SK-N-SH (cell line): ENCODE measurements at regions of chr17 and their contacts with region 1.

Region 1: DNA sequence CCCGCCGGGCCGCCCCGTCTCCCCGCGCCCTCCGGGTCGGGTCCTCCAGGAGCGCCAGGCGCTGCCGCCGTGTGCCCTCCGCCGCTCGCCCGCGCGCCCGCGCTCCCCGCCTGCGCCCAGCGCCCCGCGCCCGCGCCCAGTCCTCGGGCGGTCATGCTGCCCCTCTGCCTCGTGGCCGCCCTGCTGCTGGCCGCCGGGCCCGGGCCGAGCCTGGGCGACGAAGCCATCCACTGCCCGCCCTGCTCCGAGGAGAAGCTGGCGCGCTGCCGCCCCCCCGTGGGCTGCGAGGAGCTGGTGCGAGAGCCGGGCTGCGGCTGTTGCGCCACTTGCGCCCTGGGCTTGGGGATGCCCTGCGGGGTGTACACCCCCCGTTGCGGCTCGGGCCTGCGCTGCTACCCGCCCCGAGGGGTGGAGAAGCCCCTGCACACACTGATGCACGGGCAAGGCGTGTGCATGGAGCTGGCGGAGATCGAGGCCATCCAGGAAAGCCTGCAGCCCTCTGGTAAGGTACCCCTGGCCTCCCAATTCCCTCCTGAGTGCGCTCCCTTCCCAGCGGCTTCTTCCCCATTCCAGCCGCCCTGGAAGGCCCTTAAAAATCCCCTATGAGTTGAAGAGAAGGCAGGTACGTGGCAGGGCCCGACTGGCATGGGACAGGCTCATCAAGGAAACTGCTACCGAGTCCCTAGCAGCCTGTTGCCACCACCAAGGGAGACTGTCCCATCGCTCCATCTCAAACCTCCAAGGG is 505 bp downstream of the IGFBP4 start:
- DNase-seq: peak; percentile 92
- H3K4me3 ChIP-seq: peak overlapping the region; percentile 62 to 81
- H3K27ac ChIP-seq: peak overlapping the region; percentile 74 to 77
- H3K4me1 ChIP-seq: peaks cover 3 to 46% of the 10 kb centered on the region in 2 experiments; a peak in 2 of 4 replicates
- H3K27me3 ChIP-seq: no peaks in the 10 kb centered on the region
- CTCF ChIP-seq: peak; percentile 50
- EP300 ChIP-seq: no peak
- RAD21 ChIP-seq: peak; percentile 56

Region 2: DNA sequence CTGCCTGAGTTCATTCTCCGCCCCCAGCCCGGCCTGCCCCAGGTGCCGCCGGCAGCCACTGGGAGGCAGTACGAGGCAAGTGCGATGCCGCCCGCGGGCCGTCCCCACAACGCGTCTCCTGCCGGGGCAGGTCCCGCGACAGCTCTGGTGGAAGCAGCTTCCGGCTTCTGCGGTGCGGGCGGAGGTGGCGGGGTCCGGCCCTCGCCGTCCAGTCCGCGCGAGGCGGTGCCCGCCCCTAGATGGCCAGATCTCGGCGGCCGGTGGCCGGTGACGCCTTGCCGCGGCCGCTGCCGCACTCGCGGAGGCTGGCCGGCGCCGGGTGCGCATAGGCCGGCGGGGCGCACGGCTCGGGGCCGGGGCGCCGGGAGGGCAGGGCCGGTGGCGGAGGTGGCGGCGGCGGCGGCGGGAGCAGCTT is 81.1 kb before region 1 on chr17:
- CTCF ChIA-PET with region 1: interaction called, 19 read pairs
- POLR2A ChIA-PET with region 1: no interaction called
- DNase-seq: peak; percentile 93
- H3K4me3 ChIP-seq: peak overlapping the region; percentile 57 to 62
- H3K27ac ChIP-seq: no peak overlapping the region
- H3K4me1 ChIP-seq: peaks cover 6 to 16% of the 10 kb centered on the region in 2 experiments; a peak in 2 of 4 replicates
- H3K27me3 ChIP-seq: no peaks in the 10 kb centered on the region
- CTCF ChIP-seq: peak; percentile 72
- EP300 ChIP-seq: no peak
- RAD21 ChIP-seq: peak; percentile 68

Region 3: DNA sequence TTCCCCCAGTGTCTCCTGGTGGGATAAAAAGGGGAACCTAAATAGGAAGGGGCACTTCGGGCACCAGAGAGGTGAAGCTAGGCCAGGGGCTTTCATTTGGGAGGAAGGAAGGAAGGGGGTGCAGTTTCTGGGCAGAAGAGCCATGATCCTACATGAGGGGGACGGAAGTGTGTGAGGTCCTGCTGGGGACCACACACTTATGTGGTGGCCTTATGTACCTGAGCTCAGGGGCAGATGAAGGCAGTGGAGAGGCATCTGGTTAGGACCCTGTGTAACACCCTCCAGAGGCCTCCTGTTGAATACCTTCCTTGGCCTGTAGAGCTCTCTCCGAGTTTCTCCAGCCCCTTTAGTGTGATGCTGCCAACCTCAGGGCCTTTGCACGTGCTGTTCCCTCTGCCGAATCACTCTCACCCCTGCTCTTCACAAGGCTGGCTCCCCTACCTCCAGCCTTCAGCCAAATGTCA is 20.7 kb after region 1 on chr17:
- CTCF ChIA-PET with region 1: interaction called, 265 read pairs
- POLR2A ChIA-PET with region 1: interaction called, 5 read pairs
- DNase-seq: no peak
- H3K4me3 ChIP-seq: no peak overlapping the region
- H3K27ac ChIP-seq: no peak overlapping the region
- H3K4me1 ChIP-seq: peaks cover 12 to 40% of the 10 kb centered on the region in 2 experiments
- H3K27me3 ChIP-seq: no peaks in the 10 kb centered on the region
- CTCF ChIP-seq: no peak
- EP300 ChIP-seq: no peak
- RAD21 ChIP-seq: no peak

Region 4: DNA sequence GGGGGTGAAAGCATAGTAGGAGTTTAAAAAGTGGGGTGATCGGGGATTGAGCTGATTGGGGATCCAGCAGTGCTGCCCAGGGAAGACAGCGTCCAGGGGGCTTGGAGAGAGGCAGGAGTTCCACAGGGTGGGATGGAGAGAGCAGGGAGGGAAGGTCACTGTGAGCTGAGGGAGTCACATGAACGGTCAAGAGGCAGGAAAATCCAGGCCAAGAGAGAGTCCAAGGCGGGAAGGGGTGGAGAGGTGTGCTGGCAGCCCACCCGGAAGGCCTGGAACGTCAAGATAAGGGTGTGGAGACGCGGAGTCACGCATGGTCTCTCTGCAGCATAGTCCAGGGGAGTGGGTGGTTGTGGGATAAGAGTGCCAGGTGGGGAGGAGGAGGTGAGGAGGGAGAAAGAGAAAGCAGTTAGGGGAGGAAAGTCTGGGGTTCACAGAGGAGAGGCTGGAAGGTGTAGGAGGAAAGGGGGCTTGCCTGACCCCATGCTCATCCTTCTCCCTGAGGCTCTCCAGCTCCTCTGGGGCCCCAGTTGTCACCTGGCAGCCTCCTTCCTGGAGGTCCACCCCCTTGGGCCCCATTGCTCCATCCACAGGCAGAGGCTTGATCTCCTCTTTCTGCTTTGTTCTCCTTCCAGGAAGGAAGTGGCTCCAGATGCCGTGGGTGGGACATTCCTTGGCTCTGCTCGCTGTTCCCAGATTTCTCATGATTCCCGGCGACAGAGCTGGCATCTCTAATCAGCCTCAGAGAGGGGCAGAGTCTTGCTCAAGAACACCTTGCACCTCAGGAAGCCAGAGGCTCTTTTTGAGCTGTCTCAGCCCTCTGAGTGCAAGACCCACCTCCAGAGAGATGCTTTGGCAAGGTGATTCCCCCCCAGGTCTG is 92.8 kb after region 1 on chr17:
- CTCF ChIA-PET with region 1: interaction called, 332 read pairs
- POLR2A ChIA-PET with region 1: interaction called, 6 read pairs
- DNase-seq: no peak
- H3K4me3 ChIP-seq: no peak overlapping the region
- H3K27ac ChIP-seq: no peak overlapping the region; a peak in 1 of 4 replicates
- H3K4me1 ChIP-seq: peaks cover 5 to 49% of the 10 kb centered on the region in 2 experiments; a peak in 2 of 4 replicates
- H3K27me3 ChIP-seq: no peaks in the 10 kb centered on the region
- CTCF ChIP-seq: no peak
- EP300 ChIP-seq: no peak
- RAD21 ChIP-seq: no peak